ENCODE measurements at regions of chr7 and their contacts with region 1.

Region 1: GRCh38 chr7:103148994-103149807 is at the start of gene NAPEPLD:
- DNase-seq: peak; percentile 88 to 93
- H3K4me3 ChIP-seq: peak within 1 kb of the TSS; percentile 57 to 68
- H3K27ac ChIP-seq: peak within 1 kb of the TSS; percentile 83 to 92
- H3K4me1 ChIP-seq: peaks cover 0 to 30% (median 10%) of the 10 kb centered on the region in 4 donors
- H3K27me3 ChIP-seq: no peaks in the 10 kb centered on the region
- CTCF ChIP-seq: no peak

Region 2: GRCh38 chr7:102859084-102859798 is 290.0 kb before region 1 on chr7:
- intact Hi-C with region 1: loop called (anchors 5 kb)
- DNase-seq: no peak
- H3K4me3 ChIP-seq: no peak overlapping the region
- H3K27ac ChIP-seq: peak overlapping the region; percentile 55 to 69
- H3K4me1 ChIP-seq: peaks cover 0 to 21% (median 0%) of the 10 kb centered on the region in 4 donors
- H3K27me3 ChIP-seq: no peaks in the 10 kb centered on the region
- CTCF ChIP-seq: no peak

Region 3: GRCh38 chr7:103074519-103075336 is 74.5 kb before region 1 on chr7 and contains the starts of genes ARMC10 and FBXL13:
- intact Hi-C with region 1: loop called (anchors 10 kb)
- DNase-seq: peak; percentile 90 to 95
- H3K4me3 ChIP-seq: peak within 1 kb of the TSS; percentile 64 to 70
- H3K27ac ChIP-seq: peak within 1 kb of the TSS; percentile 89 to 91
- H3K4me1 ChIP-seq: peaks cover 0 to 24% (median 15%) of the 10 kb centered on the region in 4 donors
- H3K27me3 ChIP-seq: no peaks in the 10 kb centered on the region
- CTCF ChIP-seq: peak; percentile 34 to 38

Region 4: DNA sequence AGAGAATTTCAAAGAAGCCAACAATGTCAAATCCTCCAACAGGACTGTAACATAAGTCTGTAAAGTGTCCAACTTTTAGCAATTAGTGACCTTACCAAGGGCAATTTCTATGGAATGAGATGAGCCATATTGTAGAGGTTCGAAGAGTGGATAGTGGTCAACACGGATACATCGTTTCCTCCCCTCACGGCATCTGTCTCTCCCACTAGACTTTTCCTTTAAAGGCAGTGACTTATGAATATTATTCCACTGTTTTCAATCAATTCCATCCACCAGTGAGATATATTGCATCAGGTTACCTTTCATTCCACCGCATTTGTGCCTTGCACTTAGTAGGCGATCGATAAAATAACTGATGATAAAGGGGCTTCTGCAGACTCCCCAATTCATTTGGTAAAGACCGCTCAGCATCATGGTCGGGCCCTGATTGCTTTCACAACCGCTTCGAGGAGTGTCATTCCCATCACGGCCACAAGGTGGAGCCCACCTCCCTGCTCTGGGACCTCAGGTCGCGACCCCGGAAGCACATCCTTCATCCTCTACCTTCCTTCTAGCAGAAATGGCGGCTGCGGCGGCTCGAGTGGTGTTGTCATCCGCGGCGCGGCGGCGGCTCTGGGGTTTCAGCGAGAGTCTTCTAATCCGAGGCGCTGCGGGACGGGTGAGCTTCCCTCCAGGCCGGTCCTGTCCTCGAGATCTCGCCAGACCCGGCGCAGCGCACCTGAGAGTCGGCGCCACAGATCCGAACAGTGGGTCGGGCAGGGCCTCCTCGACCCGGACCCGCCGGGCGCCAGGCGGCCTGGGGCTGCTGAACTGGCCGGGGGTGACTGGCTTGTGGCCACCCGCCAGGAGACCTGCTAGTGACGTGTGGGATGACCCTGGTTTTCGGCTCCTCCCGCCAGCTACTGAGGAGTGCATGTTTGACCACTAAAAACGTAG is 148.0 kb after region 1 on chr7 and contains the start of gene PMPCB:
- intact Hi-C with region 1: loop called (anchors 5 kb)
- DNase-seq: peak; percentile 97
- H3K4me3 ChIP-seq: peak within 1 kb of the TSS; percentile 90 to 91
- H3K27ac ChIP-seq: peak within 1 kb of the TSS; percentile 90 to 91
- H3K4me1 ChIP-seq: peaks cover 0 to 24% (median 16%) of the 10 kb centered on the region in 4 donors
- H3K27me3 ChIP-seq: no peaks in the 10 kb centered on the region
- CTCF ChIP-seq: peak; percentile 94 to 95

Measured in tibial artery (tissue), 4 donors.